A549 (cell line): ENCODE measurements at regions of chrX and their contacts with region 1.

Region 1: DNA sequence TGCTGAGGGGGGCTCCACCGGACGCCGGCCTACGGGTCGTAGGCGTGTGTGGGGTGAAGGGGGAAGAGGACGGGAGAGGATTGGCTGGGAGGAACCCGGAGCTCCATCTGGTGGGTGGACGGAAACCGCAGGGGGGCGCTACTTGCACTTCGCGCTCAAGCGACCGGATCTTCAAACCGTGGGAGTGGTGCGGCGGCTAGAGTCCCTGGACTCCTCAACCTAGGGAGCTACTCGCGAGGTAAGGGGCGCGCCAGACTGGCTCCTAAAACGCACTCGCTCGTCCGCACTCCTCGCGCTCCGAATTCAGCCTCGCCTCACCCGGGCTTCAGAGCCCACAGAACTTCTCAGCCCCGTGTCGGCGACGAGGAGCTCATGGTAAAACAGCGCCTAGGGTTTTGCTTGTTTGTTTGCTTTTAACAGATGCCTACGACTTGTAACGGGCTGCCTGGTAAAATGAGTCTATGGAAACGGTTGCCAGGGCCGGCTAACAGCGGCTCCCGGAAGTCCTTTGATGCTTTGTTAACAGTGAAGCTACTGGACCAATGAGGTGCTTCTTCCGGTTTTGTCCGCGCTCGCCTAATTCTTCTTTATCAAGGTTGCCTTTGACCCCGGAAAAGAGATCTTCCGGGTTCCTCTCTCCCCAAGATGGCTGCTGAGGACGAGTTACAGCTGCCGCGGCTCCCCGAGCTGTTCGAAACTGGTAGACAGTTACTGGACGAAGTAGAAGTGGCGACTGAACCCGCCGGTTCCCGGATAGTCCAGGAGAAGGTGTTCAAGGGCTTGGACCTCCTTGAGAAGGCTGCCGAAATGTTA is at the start of gene IGBP1:
- DNase-seq: peak; percentile 80 to 93
- ATAC-seq: peak; percentile 95 to 97
- H3K4me3 ChIP-seq: peak within 1 kb of the TSS; percentile 68
- H3K27ac ChIP-seq: peak within 1 kb of the TSS; percentile 85 to 95
- H3K4me1 ChIP-seq: peaks cover 22% of the 10 kb centered on the region
- CTCF ChIP-seq: peak; percentile 73
- EP300 ChIP-seq: no peak
- POLR2A ChIP-seq: peak; percentile 42
- RAD21 ChIP-seq: peak; percentile 39 to 58
- polyA plus RNA-seq, gene IGBP1: 103 and 106 TPM in 2 replicates

Region 2: DNA sequence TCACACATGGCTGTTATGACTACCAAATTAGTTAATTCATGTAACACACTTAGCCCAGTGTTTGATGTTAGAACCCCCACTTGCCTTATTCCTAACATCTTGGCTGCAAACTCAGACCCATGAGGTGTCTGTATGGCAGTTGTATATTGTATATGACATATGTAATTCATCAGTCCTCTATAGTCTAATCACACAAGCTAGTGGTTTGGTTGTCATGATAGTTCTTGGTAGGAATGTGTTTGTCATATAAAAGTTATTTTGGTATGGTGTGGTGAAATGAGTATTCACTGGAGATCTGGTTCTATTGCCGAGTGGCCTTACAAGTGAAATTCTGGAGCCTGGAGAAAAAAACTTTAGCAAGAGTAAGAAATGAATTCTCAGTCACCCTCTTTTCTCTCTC is 233.0 kb before region 1 on chrX:
- CTCF ChIA-PET with region 1: no interaction called
- POLR2A ChIA-PET with region 1: no interaction called
- DNase-seq: no peak
- ATAC-seq: no peak
- H3K4me3 ChIP-seq: no peak overlapping the region
- H3K27ac ChIP-seq: no peak overlapping the region
- H3K4me1 ChIP-seq: no peaks in the 10 kb centered on the region
- CTCF ChIP-seq: no peak
- EP300 ChIP-seq: no peak
- POLR2A ChIP-seq: no peak
- RAD21 ChIP-seq: no peak

Region 3: DNA sequence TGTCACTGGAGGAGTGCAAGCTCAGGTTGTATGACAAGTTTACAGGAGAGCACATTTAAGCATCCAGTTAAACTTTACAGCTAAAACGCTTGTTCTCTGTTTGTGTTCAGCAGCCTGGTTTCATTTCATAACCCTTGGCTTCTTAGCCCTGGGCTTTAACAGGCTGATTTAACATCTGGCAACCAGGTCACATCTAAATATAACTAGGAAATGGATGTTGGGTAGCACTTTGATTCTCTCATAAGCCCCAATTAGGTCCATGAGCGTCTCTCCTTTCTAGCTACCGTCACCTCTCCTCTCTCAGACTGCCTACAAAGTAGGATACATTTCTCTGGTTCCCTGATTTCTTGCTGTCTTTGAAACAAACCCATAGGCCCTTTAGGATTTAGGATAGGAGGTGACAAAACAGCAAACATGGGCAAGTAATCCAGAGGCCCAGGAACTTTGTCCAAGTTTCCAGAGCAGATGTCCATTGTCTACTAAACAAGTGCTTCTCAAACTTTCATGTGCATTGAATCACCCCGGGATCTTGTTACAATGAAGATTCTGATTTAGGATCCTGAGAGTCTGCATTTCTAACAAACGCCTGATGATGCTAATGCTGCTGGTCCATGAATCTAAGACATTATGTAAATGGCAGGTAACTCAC is 48.8 kb before region 1 on chrX:
- CTCF ChIA-PET with region 1: no interaction called
- POLR2A ChIA-PET with region 1: no interaction called
- DNase-seq: no peak
- ATAC-seq: no peak
- H3K4me3 ChIP-seq: no peak overlapping the region
- H3K27ac ChIP-seq: no peak overlapping the region
- H3K4me1 ChIP-seq: no peaks in the 10 kb centered on the region
- CTCF ChIP-seq: no peak
- EP300 ChIP-seq: no peak
- POLR2A ChIP-seq: no peak
- RAD21 ChIP-seq: no peak

Region 4: GRCh38 chrX:70168238-70169188 is 35.0 kb after region 1 on chrX:
- CTCF ChIA-PET with region 1: interaction called, 24 read pairs
- POLR2A ChIA-PET with region 1: interaction called, 38 read pairs
- DNase-seq: peak; percentile 53 to 62
- ATAC-seq: peak; percentile 82 to 84
- H3K4me3 ChIP-seq: no peak overlapping the region; the same call in 2 of the 3 replicates
- H3K27ac ChIP-seq: peak overlapping the region; percentile 77 to 84
- H3K4me1 ChIP-seq: peaks cover 38% of the 10 kb centered on the region
- CTCF ChIP-seq: no peak
- EP300 ChIP-seq: no peak
- POLR2A ChIP-seq: no peak
- RAD21 ChIP-seq: no peak

Region 5: DNA sequence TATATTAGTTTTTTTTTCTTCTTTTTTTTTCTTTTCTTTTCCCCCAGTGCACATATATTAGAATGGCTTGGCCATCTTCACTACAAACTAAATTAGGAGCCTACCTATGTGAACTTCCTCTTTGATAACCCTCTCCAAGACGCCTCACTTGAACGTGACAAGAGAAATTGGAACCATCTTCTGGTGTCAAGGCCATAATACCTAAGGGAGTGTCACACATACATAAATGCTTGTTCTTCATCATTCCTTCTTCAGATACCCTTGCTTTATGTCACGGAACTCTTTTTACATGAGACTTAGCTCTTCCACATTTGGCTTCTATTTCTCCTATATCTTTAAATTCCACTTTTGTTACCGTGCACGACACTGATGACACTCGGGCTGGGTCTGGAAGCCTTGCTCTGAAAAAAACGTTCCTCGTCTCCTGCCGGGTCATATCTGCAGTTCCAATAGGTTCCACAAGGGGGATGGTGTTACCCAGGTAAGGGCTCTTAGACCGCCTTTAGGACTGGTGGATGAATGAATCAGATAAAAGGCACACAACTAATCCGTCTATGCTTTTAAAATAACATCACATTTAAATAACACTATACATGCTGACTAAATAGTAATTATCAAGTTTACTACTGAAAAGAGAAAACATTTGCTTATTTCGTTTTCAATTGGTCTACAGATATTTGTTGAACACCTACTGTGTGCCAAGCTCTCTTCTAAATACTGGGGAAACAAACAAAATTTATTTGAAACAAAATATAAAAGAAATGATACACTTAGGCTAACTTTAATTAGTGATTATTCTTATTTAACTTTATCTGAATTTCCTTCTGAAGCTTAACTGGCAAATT is 63.7 kb after region 1 on chrX:
- CTCF ChIA-PET with region 1: interaction called, 13 read pairs
- POLR2A ChIA-PET with region 1: no interaction called
- DNase-seq: peak; percentile 42 to 77
- ATAC-seq: peak; percentile 92
- H3K4me3 ChIP-seq: no peak overlapping the region
- H3K27ac ChIP-seq: no peak overlapping the region
- H3K4me1 ChIP-seq: no peaks in the 10 kb centered on the region
- CTCF ChIP-seq: peak; percentile 57
- EP300 ChIP-seq: no peak
- POLR2A ChIP-seq: no peak
- RAD21 ChIP-seq: peak; percentile 60 to 70

Region 6: GRCh38 chrX:70262952-70263567 is 129.6 kb after region 1 on chrX:
- CTCF ChIA-PET with region 1: interaction called, 10 read pairs
- POLR2A ChIA-PET with region 1: interaction called, 3 read pairs
- DNase-seq: peak; percentile 42 to 56
- ATAC-seq: peak; percentile 91 to 96
- H3K4me3 ChIP-seq: no peak overlapping the region
- H3K27ac ChIP-seq: no peak overlapping the region
- H3K4me1 ChIP-seq: no peaks in the 10 kb centered on the region
- CTCF ChIP-seq: peak; percentile 42
- EP300 ChIP-seq: no peak
- POLR2A ChIP-seq: no peak
- RAD21 ChIP-seq: peak; percentile 60 to 67

Region 7: DNA sequence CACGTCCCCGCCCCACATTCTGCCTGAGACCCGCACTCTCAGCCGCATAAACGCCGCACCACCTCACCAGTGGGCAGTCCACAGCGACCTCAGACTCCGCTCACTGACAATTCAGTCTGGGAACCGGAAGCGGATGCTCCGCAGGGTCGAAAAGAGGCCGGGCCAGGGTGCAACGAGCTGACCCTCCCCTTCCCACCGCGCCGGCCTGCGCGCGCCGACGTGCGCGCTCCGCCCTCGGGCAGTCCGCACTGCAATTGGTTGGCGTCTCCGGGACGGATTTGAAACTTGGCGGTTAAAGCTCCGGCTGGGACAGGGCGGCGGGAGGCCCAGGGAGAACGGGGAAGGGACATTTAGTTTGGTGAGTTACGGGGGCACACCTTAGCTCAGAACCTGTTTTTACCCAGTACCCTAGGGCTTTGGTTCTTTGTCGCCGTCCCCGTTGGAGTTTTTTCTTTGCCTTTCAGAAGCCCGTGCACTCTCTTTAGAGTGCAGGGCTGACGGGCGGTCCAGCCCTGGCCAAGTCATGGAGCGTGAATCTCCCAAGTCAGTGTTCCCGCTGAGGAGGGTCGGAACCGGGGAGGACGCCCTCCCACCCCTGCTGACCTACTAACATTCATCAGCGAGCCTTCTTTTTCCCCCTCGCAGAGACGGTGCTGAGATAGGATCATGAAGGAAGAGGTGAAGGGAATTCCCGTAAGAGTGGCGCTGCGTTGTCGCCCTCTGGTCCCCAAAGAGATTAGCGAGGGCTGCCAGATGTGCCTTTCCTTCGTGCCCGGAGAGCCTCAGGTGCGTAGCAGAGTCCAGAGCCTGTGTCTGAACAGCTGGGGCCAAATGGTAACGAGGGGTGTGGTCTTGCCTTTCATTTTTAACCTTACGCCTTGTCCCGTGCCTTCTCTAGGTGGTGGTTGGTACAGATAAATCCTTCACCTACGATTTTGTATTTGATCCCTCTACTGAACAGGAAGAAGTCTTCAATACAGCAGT is 156.6 kb after region 1 on chrX and contains the starts of genes KIF4A and PDZD11:
- CTCF ChIA-PET with region 1: interaction called, 8 read pairs
- POLR2A ChIA-PET with region 1: interaction called, 17 read pairs
- DNase-seq: peak; percentile 86 to 95
- ATAC-seq: peak; percentile 100
- H3K4me3 ChIP-seq: peak within 1 kb of the TSS; percentile 92
- H3K27ac ChIP-seq: peak within 1 kb of the TSS; percentile 83 to 85
- H3K4me1 ChIP-seq: peaks cover 22% of the 10 kb centered on the region; the same call in 1 of the 3 replicates
- CTCF ChIP-seq: no peak
- EP300 ChIP-seq: no peak
- POLR2A ChIP-seq: peak; percentile 77
- RAD21 ChIP-seq: no peak
- polyA plus RNA-seq, gene KIF4A: 34.5 and 46.6 TPM in 2 replicates
- polyA plus RNA-seq, gene PDZD11: 133 and 159 TPM in 2 replicates

Region 8: GRCh38 chrX:70433848-70434351 is 300.4 kb after region 1 on chrX:
- CTCF ChIA-PET with region 1: interaction called, 12 read pairs
- POLR2A ChIA-PET with region 1: interaction called, 10 read pairs
- DNase-seq: peak; percentile 53 to 70
- ATAC-seq: peak; percentile 70 to 84
- H3K4me3 ChIP-seq: peak overlapping the region; percentile 72
- H3K27ac ChIP-seq: peak overlapping the region; percentile 78 to 88
- H3K4me1 ChIP-seq: peaks cover 9% of the 10 kb centered on the region; the same call in 1 of the 3 replicates
- CTCF ChIP-seq: peak; percentile 65
- EP300 ChIP-seq: no peak
- POLR2A ChIP-seq: no peak
- RAD21 ChIP-seq: peak; percentile 50 to 66